Mammary epithelial cell (primary cell): ENCODE measurements at regions of chr3 and their contacts with region 1.

Region 1: GRCh38 chr3:12349895-12350813 is 61.3 kb downstream of the PPARG start:
- DNase-seq: no peak
- H3K4me3 ChIP-seq: no peak overlapping the region
- H3K27ac ChIP-seq: no peak overlapping the region
- H3K4me1 ChIP-seq: peaks cover 8% of the 10 kb centered on the region
- H3K27me3 ChIP-seq: no peaks in the 10 kb centered on the region
- CTCF ChIP-seq: no peak

Region 2: DNA sequence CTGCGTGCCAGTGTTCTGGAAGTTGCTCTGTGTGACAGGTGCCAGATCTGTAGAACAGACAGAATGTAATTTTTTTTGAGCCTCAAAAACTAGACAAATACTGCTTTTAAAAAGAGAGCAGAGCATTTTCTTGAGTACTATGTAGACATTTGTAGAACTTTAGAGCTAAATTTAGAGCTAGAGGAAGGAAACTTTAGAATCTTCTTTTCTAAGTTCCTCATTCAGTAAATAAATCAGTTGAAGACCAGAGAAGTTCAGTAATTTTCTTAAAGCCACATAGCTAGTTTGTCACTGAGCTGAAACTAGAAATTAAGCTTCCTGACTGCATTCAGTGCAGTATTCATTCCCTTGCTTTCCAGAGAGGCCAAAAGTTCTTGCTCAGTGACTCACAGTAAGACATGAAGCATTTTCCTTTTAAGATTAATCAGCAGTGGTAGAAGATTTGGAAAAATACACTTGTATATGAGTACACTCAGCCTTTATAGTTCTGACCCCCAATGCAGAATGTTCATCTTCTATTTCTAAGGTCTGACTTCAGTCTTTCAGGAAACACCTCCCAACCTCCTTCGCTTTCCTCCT is 50.6 kb after region 1 on chr3:
- CTCF ChIA-PET with region 1: no interaction called
- dilution Hi-C with region 1: loop called (anchors 5 kb)
- in situ Hi-C with region 1: no loop called
- intact Hi-C with region 1: no loop called
- DNase-seq: peak; percentile 14
- H3K4me3 ChIP-seq: no peak overlapping the region
- H3K27ac ChIP-seq: no peak overlapping the region
- H3K4me1 ChIP-seq: no peaks in the 10 kb centered on the region
- H3K27me3 ChIP-seq: no peaks in the 10 kb centered on the region
- CTCF ChIP-seq: no peak

Region 3: DNA sequence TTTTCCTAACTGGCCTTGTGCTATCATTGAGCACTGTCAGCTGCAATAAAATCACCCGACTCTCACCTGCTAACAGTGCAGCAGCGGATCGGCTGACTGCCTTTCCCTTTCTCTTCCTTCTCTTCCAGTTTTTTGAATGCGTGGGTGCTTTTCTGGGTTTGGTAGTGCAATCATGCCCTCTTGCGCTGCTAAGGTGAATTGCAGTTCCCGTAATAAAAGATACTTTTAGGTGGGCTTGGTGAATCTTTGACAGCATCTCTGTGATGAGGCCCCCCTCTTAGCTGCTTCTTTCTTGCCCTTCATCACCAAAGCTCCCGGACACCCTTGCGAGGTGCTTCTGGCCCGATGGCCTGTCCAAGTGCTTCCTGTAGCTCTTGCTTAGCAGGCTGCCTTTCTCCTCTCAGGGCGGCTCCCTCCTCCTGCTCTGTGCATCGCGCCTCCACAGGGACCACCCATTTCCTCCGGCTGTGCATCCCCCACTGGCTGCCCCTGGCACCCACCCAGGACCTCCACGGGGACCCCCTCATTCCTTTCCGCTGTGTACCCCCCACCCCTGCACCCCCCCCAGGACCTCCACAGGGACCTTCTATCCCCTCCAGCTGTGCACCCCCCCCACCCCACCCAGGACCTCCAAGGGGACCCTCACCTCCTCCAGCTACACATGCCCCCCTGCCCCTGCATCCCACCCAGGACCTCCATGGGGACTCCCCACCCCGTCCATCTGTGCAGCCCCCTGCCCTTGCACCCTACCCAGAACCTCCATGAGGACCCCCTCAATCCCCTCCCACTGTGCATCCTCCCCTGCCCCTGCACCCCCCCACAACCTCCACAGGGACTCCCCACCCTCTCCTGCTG is 542.1 kb after region 1 on chr3:
- CTCF ChIA-PET with region 1: no interaction called
- dilution Hi-C with region 1: no loop called
- in situ Hi-C with region 1: no loop called
- intact Hi-C with region 1: no loop called
- DNase-seq: peak; percentile 45
- H3K4me3 ChIP-seq: peak overlapping the region in 1 of 3 experiments; percentile 10
- H3K27ac ChIP-seq: no peak overlapping the region
- H3K4me1 ChIP-seq: peaks cover 3% of the 10 kb centered on the region
- H3K27me3 ChIP-seq: no peaks in the 10 kb centered on the region
- CTCF ChIP-seq: peak; percentile 88 to 94